Mucosa of descending colon (tissue), 3 donors: ENCODE measurements at regions of chr12 and their contacts with region 1.

Region 1: GRCh38 chr12:89470741-89471509 is 53.7 kb downstream of the GALNT4 start:
- DNase-seq: no peak
- ATAC-seq: peak; percentile 91
- H3K4me3 ChIP-seq: no peak overlapping the region
- H3K4me1 ChIP-seq: peaks cover 7% of the 10 kb centered on the region
- CTCF ChIP-seq: peak; percentile 44

Region 2: GRCh38 chr12:89019408-89020120 is 451.4 kb before region 1 on chr12:
- intact Hi-C with region 1: loop called in 1 of 2 experiments (anchors 5 kb)
- DNase-seq: peak in 2 of 3 donors; percentile 53 to 92
- ATAC-seq: peak; percentile 98
- H3K4me3 ChIP-seq: no peak overlapping the region
- H3K4me1 ChIP-seq: peaks cover 4% of the 10 kb centered on the region
- CTCF ChIP-seq: peak; percentile 67

Region 3: GRCh38 chr12:89524541-89525285 is 53.8 kb after region 1 on chr12 and contains the start of gene GALNT4:
- intact Hi-C with region 1: loop called (anchors 2 to 10 kb)
- DNase-seq: peak; percentile 91 to 93 (median 93)
- ATAC-seq: peak; percentile 88
- H3K4me3 ChIP-seq: peak within 1 kb of the TSS; percentile 82
- H3K4me1 ChIP-seq: peaks cover 14% of the 10 kb centered on the region
- CTCF ChIP-seq: peak; percentile 28
- total RNA-seq, gene GALNT4: 19.3 to 49.6 (median 41.9) TPM

Region 4: GRCh38 chr12:89529738-89530137 is 58.8 kb after region 1 on chr12:
- intact Hi-C with region 1: loop called (anchors 2 to 10 kb)
- DNase-seq: no peak
- ATAC-seq: peak; percentile 31
- H3K4me3 ChIP-seq: no peak overlapping the region
- H3K4me1 ChIP-seq: no peaks in the 10 kb centered on the region
- CTCF ChIP-seq: peak; percentile 40

Region 5: GRCh38 chr12:89597770-89598169 is 126.8 kb after region 1 on chr12:
- intact Hi-C with region 1: no loop called
- DNase-seq: no peak
- ATAC-seq: no peak
- H3K4me3 ChIP-seq: no peak overlapping the region
- H3K4me1 ChIP-seq: no peaks in the 10 kb centered on the region
- CTCF ChIP-seq: no peak

Region 6: DNA sequence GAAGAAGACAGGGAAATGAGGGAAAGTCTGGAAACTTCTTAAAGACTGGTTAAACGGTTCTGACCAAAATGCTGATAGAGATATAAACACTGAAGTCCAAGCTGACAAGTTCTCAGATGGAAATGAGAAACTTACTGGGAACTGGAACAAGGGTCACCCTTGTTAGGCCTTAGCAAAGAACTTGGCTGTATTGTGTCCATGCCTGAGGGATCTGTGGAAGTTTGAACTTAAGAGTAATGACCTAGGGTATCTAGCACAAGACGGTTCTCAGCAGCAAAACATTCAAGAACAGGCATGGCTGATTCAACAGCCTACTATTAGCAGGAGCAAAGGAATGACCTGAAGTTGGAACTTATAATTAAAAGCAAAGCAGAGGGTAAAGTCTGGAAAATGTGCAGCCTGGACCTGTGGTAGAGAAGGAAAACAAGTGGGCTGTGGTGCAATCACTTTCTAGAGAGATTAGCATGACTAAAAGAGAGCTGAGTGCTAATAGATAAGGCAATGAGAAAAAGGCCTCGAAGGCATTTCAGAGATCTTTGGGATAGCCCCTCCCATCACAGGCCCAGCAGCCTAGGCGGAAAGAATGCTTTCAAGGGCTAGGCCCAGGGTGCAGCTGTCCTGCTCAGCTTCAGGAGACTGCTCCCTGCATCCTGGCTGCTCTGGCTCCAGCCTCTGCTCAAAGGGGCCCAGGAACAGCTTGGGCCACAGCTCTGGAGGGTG is 177.4 kb after region 1 on chr12:
- intact Hi-C with region 1: no loop called
- DNase-seq: peak in 1 of 3 donors; percentile 30
- ATAC-seq: peak; percentile 18
- H3K4me3 ChIP-seq: no peak overlapping the region
- H3K4me1 ChIP-seq: no peaks in the 10 kb centered on the region
- CTCF ChIP-seq: no peak